Tibial artery (tissue), 4 donors: ENCODE measurements at regions of chr9 and their contacts with region 1.

Region 1: GRCh38 chr9:131334629-131335367 is 45.3 kb downstream of the PLPP7 start:
- DNase-seq: peak; percentile 38 to 84
- H3K4me3 ChIP-seq: no peak overlapping the region
- H3K27ac ChIP-seq: no peak overlapping the region
- H3K4me1 ChIP-seq: peaks cover 0 to 12% (median 0%) of the 10 kb centered on the region in 4 donors
- H3K27me3 ChIP-seq: no peaks in the 10 kb centered on the region
- CTCF ChIP-seq: no peak

Region 2: GRCh38 chr9:131056781-131057506 is 277.9 kb before region 1 on chr9:
- intact Hi-C with region 1: loop called (anchors 5 kb)
- DNase-seq: no peak
- H3K4me3 ChIP-seq: no peak overlapping the region
- H3K27ac ChIP-seq: no peak overlapping the region
- H3K4me1 ChIP-seq: no peaks in the 10 kb centered on the region
- H3K27me3 ChIP-seq: peaks cover 0 to 23% of the 10 kb centered on the region in 2 donors
- CTCF ChIP-seq: no peak

Region 3: GRCh38 chr9:131178382-131178781 is 156.4 kb before region 1 on chr9:
- intact Hi-C with region 1: loop called (anchors 5 kb)
- DNase-seq: peak; percentile 60 to 65
- H3K4me3 ChIP-seq: no peak overlapping the region
- H3K27ac ChIP-seq: no peak overlapping the region
- H3K4me1 ChIP-seq: no peaks in the 10 kb centered on the region
- H3K27me3 ChIP-seq: no peaks in the 10 kb centered on the region
- CTCF ChIP-seq: peak; percentile 81 to 84

Region 4: DNA sequence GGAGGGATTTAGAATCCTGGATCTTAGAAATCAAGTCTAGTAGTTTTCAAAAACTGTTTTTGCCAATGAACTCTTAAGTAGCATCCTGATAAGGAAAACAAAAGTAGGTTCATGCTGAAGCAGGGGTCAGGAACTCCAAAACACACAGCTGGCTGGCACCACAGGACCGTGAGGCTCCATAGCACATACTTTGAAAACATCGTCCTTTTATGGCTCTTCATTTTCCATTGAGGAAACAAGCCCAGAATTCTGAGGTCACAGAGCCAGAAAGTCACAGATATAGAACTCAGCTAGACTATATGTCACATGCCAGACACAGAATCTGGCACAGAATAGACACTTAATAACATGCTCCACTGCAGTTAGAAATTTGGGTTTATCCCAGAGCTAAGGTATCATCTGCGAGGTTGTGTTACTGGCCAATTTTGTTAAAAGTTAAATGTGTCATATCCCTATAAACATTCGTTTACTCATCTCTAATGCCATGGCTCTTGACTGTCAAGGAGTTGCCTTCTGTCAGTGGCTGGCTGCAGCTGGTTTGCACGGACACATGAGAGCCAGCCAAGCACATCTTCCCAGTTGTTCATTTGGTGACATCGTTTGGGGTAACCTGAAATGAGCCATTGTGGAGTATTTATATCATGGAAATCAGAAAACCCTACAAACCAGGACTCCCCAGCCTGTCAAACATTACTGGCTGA is 117.3 kb before region 1 on chr9:
- intact Hi-C with region 1: no loop called
- DNase-seq: no peak
- H3K4me3 ChIP-seq: no peak overlapping the region
- H3K27ac ChIP-seq: peak overlapping the region in 1 of 2 donors; percentile 38
- H3K4me1 ChIP-seq: peaks cover 0 to 16% (median 4%) of the 10 kb centered on the region in 4 donors
- H3K27me3 ChIP-seq: no peaks in the 10 kb centered on the region
- CTCF ChIP-seq: no peak